ENCODE measurements at regions of chr1 and their contacts with region 1.

Region 1: DNA sequence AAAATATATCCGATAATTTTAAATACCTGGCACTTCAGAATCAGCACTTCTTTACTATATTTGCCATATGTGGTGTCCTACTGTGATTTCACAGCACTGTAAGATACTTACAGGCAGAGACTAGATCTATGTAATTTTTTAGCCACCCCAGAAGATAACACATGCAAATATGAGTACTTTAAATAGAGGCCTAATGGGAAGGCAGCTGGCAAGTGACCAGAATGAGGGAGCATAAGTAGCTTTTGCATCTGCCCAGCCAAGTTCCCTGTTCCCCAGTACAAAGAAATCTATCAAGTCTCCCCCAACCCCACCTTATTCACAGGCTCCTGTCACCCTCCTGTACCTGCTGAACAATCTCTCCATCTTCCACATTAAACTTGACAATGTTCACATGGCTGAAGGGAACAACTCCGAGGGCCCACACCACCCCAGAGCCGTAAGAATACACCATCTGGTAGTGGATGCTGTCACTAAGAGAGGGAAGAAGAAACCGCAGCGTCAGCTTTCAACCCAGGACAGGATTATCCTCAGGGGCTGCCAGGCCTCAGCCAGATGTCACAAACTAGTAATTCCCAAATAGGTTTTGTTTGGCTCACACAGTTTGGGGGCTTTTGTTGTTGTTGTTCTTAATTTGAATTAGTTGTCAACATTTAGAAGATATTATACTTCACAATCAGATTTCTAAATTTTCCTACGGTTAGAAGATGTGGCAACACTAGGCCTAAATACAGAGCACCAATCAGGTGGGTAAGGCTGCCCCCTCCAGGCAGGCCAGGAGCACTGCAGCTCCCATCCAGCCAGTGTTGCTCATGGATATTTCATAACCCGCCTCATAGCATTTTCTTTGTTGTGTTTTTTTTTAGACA is 10.4 kb downstream of the EMC1 start:
- DNase-seq: no peak
- H3K4me3 ChIP-seq: no peak overlapping the region
- H3K27me3 ChIP-seq: no peaks in the 10 kb centered on the region
- CTCF ChIP-seq: peak; percentile 94

Region 2: GRCh38 chr1:18875107-18875795 is 365.7 kb before region 1 on chr1:
- CTCF ChIA-PET with region 1: no interaction called
- POLR2A ChIA-PET with region 1: no interaction called
- DNase-seq: peak; percentile 21
- H3K4me3 ChIP-seq: no peak overlapping the region
- H3K27me3 ChIP-seq: no peaks in the 10 kb centered on the region
- CTCF ChIP-seq: peak; percentile 90

Region 3: GRCh38 chr1:19220991-19221390 is 19.9 kb before region 1 on chr1:
- CTCF ChIA-PET with region 1: interaction called, 11 read pairs
- POLR2A ChIA-PET with region 1: interaction called, 18 read pairs
- DNase-seq: no peak
- H3K4me3 ChIP-seq: no peak overlapping the region
- H3K27me3 ChIP-seq: no peaks in the 10 kb centered on the region
- CTCF ChIP-seq: no peak

Region 4: GRCh38 chr1:19229828-19230325 is 11.0 kb before region 1 on chr1:
- CTCF ChIA-PET with region 1: interaction called, 10 read pairs
- POLR2A ChIA-PET with region 1: no interaction called
- DNase-seq: no peak
- H3K4me3 ChIP-seq: no peak overlapping the region
- H3K27me3 ChIP-seq: no peaks in the 10 kb centered on the region
- CTCF ChIP-seq: no peak

Region 5: DNA sequence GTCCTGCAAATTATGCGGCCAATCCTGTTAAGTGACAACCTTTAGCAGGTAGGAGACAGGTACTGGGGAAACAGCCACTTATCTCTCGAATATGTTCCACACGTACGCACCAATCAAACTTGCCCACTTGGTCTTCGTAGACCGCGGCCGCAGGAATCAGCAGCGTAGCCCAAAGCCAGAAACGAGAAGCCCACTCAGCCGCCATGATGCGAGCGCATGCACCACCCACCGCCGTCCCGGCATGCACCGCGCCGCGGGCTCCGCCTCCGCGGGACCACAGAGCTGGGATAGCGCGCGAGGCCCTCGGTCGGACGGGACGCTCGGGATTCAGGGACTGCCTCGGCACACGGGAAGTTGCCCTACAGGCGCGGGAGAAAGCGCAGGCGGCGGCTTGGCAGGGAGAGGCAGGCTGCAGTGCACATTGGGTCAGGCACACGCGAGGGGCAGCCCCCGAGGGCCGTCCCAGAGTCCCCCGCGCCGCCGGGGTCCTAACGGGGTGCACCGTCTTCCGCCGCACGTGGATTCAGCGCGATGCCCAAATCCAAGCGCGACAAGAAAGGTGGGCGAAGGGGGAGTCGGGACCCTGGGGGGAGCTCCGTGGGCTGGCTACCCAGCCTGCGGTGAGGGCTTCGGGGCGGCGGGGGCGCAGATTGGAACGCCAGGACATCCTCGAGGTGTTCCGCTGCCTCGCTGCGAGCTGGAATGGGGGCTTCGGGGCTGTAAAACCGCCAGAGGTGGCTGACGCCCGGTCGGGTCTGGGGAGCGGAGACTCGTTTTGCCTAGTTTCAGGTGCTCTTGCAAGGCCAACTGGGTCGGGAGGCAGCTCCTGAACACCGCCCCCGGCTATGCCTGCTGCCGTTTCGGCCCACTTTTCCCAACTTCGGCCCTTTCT is 10.6 kb after region 1 on chr1 and contains the starts of genes EMC1 and MRTO4:
- CTCF ChIA-PET with region 1: interaction called, 13 read pairs
- POLR2A ChIA-PET with region 1: no interaction called
- DNase-seq: no peak
- H3K4me3 ChIP-seq: peak within 1 kb of the TSS; percentile 81
- H3K27me3 ChIP-seq: no peaks in the 10 kb centered on the region
- CTCF ChIP-seq: no peak
- polyA plus RNA-seq, gene EMC1: 43.2 and 93.8 TPM in 2 replicates
- polyA plus RNA-seq, gene MRTO4: 31.4 and 37.5 TPM in 2 replicates

Region 6: DNA sequence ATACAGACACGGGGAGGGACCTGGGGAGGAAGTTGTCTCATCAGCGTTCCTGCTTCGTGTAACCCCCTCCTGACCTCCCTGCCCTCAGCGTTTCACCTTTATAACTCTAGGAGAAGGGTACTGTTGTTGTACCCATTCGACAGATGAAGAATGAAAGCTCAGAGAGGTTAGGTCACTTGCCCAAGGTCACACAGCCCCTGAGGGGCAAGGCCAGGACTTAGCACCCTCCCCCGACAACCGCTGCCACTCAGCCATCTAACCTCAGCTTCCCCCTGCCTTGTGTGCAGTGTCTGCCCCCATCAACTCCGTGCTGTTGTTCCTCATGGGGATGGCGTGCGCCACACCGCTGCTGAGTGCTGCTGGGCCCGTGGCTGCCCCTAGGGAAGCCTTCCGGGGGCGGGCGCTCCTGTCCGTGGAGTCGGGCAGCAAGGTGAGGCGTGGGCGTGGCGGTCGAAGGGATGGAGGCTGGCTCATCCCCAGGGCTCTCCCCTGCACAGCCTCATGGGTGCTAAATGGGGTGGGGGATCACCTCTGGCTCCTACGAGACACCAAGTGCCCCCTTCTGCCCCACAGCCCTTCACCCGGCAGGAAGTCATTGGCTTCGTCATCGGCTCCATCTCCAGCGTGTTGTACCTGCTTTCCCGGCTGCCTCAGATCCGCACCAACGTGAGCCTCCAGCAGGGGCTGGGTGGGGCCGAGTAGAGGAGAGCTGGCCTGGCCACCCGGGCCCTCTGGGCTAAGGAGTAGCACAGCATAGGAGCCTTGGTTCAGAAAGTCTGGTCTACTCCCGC is 85.2 kb after region 1 on chr1:
- CTCF ChIA-PET with region 1: no interaction called
- POLR2A ChIA-PET with region 1: no interaction called
- DNase-seq: no peak
- H3K4me3 ChIP-seq: no peak overlapping the region
- H3K27me3 ChIP-seq: no peaks in the 10 kb centered on the region
- CTCF ChIP-seq: no peak